Activated CD4-positive, alpha-beta memory T cell treated with anti-CD3 and anti-CD28 coated beads, Interleukin-2, amount 10 ng/mL, durations not matched to agents 7 days and 5 days (primary cell): ENCODE measurements at regions of chr18 and their contacts with region 1.

Region 1: GRCh38 chr18:10571537-10571936 is 45.7 kb downstream of the NAPG start:
- DNase-seq: no peak
- H3K4me3 Mint-ChIP-seq: no peak overlapping the region
- H3K27ac Mint-ChIP-seq: no peak overlapping the region
- H3K4me1 Mint-ChIP-seq: no peaks in the 10 kb centered on the region
- H3K27me3 Mint-ChIP-seq: no peaks in the 10 kb centered on the region

Region 2: GRCh38 chr18:10560450-10561045 is 11.0 kb before region 1 on chr18:
- CTCF ChIA-PET with region 1: interaction called, 14 read pairs
- POLR2A ChIA-PET with region 1: no interaction called
- DNase-seq: peak; percentile 66
- H3K4me3 Mint-ChIP-seq: no peak overlapping the region
- H3K27ac Mint-ChIP-seq: no peak overlapping the region
- H3K4me1 Mint-ChIP-seq: peaks cover 9% of the 10 kb centered on the region
- H3K27me3 Mint-ChIP-seq: no peaks in the 10 kb centered on the region